ENCODE measurements at regions of chr3 and their contacts with region 1.

Region 1: GRCh38 chr3:19866751-19867347 is 67.2 kb downstream of the EFHB start:
- DNase-seq: peak; percentile 42
- H3K4me3 ChIP-seq: no peak overlapping the region
- H3K27ac ChIP-seq: no peak overlapping the region
- H3K4me1 ChIP-seq: no peaks in the 10 kb centered on the region
- H3K27me3 ChIP-seq: no peaks in the 10 kb centered on the region
- CTCF ChIP-seq: peak; percentile 75

Region 2: GRCh38 chr3:18559331-18559842 is 1307.5 kb before region 1 on chr3:
- CTCF ChIA-PET with region 1: no interaction called
- dilution Hi-C with region 1: no loop called
- in situ Hi-C with region 1: no loop called
- intact Hi-C with region 1: loop called (anchors 5 kb)
- DNase-seq: peak; percentile 47
- H3K4me3 ChIP-seq: no peak overlapping the region
- H3K27ac ChIP-seq: no peak overlapping the region
- H3K4me1 ChIP-seq: no peaks in the 10 kb centered on the region
- H3K27me3 ChIP-seq: peaks cover 2% of the 10 kb centered on the region
- CTCF ChIP-seq: peak; percentile 77 to 81

Region 3: GRCh38 chr3:19046440-19046839 is 820.4 kb before region 1 on chr3:
- CTCF ChIA-PET with region 1: no interaction called
- dilution Hi-C with region 1: no loop called
- in situ Hi-C with region 1: loop called in 1 of 2 experiments (anchors 25 kb)
- intact Hi-C with region 1: loop called (anchors 2 kb)
- DNase-seq: no peak
- H3K4me3 ChIP-seq: no peak overlapping the region
- H3K27ac ChIP-seq: no peak overlapping the region
- H3K4me1 ChIP-seq: no peaks in the 10 kb centered on the region
- H3K27me3 ChIP-seq: no peaks in the 10 kb centered on the region
- CTCF ChIP-seq: no peak

Region 4: DNA sequence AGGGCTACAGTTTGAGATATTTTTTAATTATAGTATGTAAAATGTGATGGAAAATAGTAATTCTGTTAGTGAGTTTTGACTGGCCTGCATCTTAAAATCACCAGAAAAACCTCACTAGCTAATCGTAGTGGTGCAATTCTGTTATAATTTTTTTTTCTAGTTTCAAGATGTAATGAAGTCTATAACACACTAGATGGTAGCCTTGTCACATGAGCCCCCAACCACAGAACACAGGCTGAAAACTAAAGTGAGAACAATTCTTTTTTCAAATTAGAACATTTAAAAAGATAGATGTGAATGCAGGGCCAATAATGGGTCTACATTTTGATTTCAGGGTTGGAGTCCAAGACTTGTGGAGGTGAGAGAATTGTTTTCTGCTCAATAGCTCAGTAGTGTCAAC is 801.8 kb before region 1 on chr3:
- CTCF ChIA-PET with region 1: no interaction called
- dilution Hi-C with region 1: no loop called
- in situ Hi-C with region 1: loop called in 1 of 2 experiments (anchors 25 kb)
- intact Hi-C with region 1: loop called (anchors 5 kb)
- DNase-seq: no peak
- H3K4me3 ChIP-seq: no peak overlapping the region
- H3K27ac ChIP-seq: no peak overlapping the region
- H3K4me1 ChIP-seq: no peaks in the 10 kb centered on the region
- H3K27me3 ChIP-seq: no peaks in the 10 kb centered on the region
- CTCF ChIP-seq: no peak

Region 5: GRCh38 chr3:19348929-19349564 is 517.8 kb before region 1 on chr3:
- CTCF ChIA-PET with region 1: interaction called, 8 read pairs
- dilution Hi-C with region 1: no loop called
- in situ Hi-C with region 1: loop called (anchors 10 to 25 kb)
- intact Hi-C with region 1: loop called (anchors 1 kb)
- DNase-seq: peak; percentile 9
- H3K4me3 ChIP-seq: no peak overlapping the region
- H3K27ac ChIP-seq: no peak overlapping the region
- H3K4me1 ChIP-seq: no peaks in the 10 kb centered on the region
- H3K27me3 ChIP-seq: no peaks in the 10 kb centered on the region
- CTCF ChIP-seq: peak; percentile 69 to 74

Region 6: DNA sequence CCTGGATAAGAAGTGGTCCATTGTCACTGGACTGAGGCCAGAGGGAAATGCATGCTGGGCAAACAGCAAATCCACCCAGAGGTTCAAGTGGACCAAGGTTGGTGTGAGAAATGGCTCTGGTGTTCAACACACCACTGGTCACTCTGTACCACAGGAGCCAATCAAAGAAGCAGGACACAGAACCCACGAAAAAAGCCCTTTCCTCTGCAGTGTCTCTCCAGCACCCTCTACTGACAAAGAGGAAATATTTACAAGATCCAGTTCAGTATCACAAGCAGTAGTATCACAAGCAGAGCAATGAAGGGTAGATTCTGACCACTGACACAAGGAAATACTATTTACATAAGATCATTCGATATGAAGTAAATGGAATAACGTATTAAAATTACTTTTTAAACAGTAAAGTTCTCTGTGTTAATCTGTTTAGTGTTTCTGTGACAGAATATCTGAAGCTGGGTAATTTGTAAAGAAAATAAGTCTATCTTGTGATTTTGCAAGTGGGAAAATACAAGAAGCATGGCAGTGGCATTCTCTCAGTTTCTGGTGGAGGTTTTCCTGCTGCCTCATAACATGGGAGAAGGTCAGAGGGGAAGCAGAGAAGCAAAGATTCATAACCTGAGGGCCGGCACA is 323.5 kb before region 1 on chr3:
- CTCF ChIA-PET with region 1: no interaction called
- dilution Hi-C with region 1: no loop called
- in situ Hi-C with region 1: no loop called
- intact Hi-C with region 1: loop called (anchors 2 kb)
- DNase-seq: peak; percentile 29
- H3K4me3 ChIP-seq: no peak overlapping the region
- H3K27ac ChIP-seq: no peak overlapping the region
- H3K4me1 ChIP-seq: no peaks in the 10 kb centered on the region
- H3K27me3 ChIP-seq: no peaks in the 10 kb centered on the region
- CTCF ChIP-seq: peak; percentile 47 to 84

Region 7: DNA sequence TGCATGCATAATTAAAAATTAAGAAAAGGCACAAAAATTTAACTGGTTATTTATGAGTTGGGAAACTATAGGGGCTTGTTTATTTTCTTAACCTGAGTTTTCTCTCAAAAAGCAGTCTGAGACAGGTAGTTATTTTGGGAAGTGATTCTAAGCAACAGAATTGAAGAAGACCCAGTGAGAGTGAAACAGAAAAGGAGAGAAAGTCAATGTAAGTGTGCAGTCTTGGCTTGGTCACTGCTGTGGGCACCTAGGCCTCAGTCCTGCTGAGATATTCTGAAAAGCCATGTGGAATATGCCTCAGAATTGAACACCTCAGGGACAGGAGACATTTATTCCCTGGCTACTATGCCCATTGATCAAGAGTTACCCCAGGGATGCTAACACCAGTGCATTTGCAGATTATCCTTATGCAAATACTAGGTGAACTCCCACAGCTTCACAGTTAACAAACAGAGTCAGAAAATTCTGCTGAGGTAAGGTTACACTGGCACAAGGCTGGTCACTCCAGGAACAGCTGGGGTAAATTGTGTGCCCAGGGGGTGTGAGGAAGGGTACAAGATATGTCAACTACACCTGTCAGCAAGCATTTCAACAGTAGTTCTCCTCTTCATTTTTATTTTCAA is 155.6 kb before region 1 on chr3:
- CTCF ChIA-PET with region 1: no interaction called
- dilution Hi-C with region 1: no loop called
- in situ Hi-C with region 1: no loop called
- intact Hi-C with region 1: no loop called
- DNase-seq: no peak
- H3K4me3 ChIP-seq: no peak overlapping the region
- H3K27ac ChIP-seq: no peak overlapping the region
- H3K4me1 ChIP-seq: no peaks in the 10 kb centered on the region
- H3K27me3 ChIP-seq: no peaks in the 10 kb centered on the region
- CTCF ChIP-seq: no peak

Region 8: DNA sequence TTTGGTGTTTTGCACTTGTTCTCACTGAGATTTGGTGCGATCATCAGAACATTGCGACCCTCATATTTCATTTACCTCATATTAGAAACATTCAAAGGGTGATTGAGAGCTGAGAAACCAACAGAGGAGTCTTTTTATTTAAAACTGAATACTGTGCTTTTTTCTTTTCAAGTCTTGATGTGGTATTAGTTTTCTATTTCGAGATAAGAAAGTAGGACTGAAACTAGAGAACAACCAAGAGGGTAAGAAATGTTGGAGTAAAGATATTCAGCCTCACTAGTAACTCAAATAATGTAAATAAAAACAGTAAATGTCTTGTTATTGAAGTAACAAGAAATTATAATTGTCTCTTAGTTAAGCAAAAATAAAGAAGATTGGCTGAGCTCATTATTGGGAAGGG is 40.7 kb after region 1 on chr3:
- CTCF ChIA-PET with region 1: no interaction called
- dilution Hi-C with region 1: no loop called
- in situ Hi-C with region 1: no loop called
- intact Hi-C with region 1: no loop called
- DNase-seq: no peak
- H3K4me3 ChIP-seq: no peak overlapping the region
- H3K27ac ChIP-seq: no peak overlapping the region
- H3K4me1 ChIP-seq: no peaks in the 10 kb centered on the region
- H3K27me3 ChIP-seq: no peaks in the 10 kb centered on the region
- CTCF ChIP-seq: no peak